Activated CD4-positive, alpha-beta T cell treated with anti-CD3 and anti-CD28 coated beads for 36 hours (primary cell): ENCODE measurements at regions of chr12 and their contacts with region 1.

Region 1: GRCh38 chr12:11202811-11203210 is 16.1 kb upstream of the TAS2R42 start:
- DNase-seq: no peak
- ATAC-seq: no peak
- H3K4me3 Mint-ChIP-seq: no peak overlapping the region
- H3K27ac Mint-ChIP-seq: no peak overlapping the region
- H3K4me1 Mint-ChIP-seq: no peaks in the 10 kb centered on the region
- H3K27me3 Mint-ChIP-seq: no peaks in the 10 kb centered on the region

Region 2: GRCh38 chr12:10771132-10771733 is 431.6 kb before region 1 on chr12:
- CTCF ChIA-PET with region 1: interaction called, 37 read pairs
- POLR2A ChIA-PET with region 1: no interaction called
- intact Hi-C with region 1: loop called (anchors 1 kb)
- DNase-seq: no peak
- ATAC-seq: no peak
- H3K4me3 Mint-ChIP-seq: no peak overlapping the region
- H3K27ac Mint-ChIP-seq: no peak overlapping the region
- H3K4me1 Mint-ChIP-seq: no peaks in the 10 kb centered on the region
- H3K27me3 Mint-ChIP-seq: peaks cover 33% of the 10 kb centered on the region

Region 3: GRCh38 chr12:10959804-10960203 is 243.0 kb before region 1 on chr12:
- CTCF ChIA-PET with region 1: interaction called, 5 read pairs
- POLR2A ChIA-PET with region 1: no interaction called
- intact Hi-C with region 1: loop called in 1 of 2 experiments (anchors 5 kb)
- DNase-seq: no peak
- ATAC-seq: no peak
- H3K4me3 Mint-ChIP-seq: no peak overlapping the region
- H3K27ac Mint-ChIP-seq: no peak overlapping the region
- H3K4me1 Mint-ChIP-seq: peaks cover 33% of the 10 kb centered on the region
- H3K27me3 Mint-ChIP-seq: no peaks in the 10 kb centered on the region